ENCODE measurements at regions of chr17 and their contacts with region 1.

Region 1: GRCh38 chr17:45277216-45277849 is 15.4 kb upstream of the SPATA32 start:
- DNase-seq: peak; percentile 97
- H3K4me3 ChIP-seq: peak overlapping the region in 2 of 4 donors; percentile 5 to 9
- H3K27ac ChIP-seq: peak overlapping the region; percentile 68 to 99 (median 82)
- H3K4me1 ChIP-seq: peaks cover 34 to 74% (median 66%) of the 10 kb centered on the region in 4 donors
- H3K27me3 ChIP-seq: no peaks in the 10 kb centered on the region
- CTCF ChIP-seq: peak; percentile 70 to 94 (median 79)
- EP300 ChIP-seq: no peak
- POLR2A ChIP-seq: no peak

Region 2: GRCh38 chr17:45311760-45312476 is 34.6 kb after region 1 on chr17:
- intact Hi-C with region 1: loop called (anchors 5 kb)
- DNase-seq: no peak
- H3K4me3 ChIP-seq: peak overlapping the region; percentile 25 to 41 (median 26)
- H3K27ac ChIP-seq: peak overlapping the region; percentile 92 to 99 (median 94)
- H3K4me1 ChIP-seq: peaks cover 72 to 96% (median 91%) of the 10 kb centered on the region in 4 donors
- H3K27me3 ChIP-seq: no peaks in the 10 kb centered on the region
- CTCF ChIP-seq: no peak
- EP300 ChIP-seq: no peak
- POLR2A ChIP-seq: no peak

Region 3: DNA sequence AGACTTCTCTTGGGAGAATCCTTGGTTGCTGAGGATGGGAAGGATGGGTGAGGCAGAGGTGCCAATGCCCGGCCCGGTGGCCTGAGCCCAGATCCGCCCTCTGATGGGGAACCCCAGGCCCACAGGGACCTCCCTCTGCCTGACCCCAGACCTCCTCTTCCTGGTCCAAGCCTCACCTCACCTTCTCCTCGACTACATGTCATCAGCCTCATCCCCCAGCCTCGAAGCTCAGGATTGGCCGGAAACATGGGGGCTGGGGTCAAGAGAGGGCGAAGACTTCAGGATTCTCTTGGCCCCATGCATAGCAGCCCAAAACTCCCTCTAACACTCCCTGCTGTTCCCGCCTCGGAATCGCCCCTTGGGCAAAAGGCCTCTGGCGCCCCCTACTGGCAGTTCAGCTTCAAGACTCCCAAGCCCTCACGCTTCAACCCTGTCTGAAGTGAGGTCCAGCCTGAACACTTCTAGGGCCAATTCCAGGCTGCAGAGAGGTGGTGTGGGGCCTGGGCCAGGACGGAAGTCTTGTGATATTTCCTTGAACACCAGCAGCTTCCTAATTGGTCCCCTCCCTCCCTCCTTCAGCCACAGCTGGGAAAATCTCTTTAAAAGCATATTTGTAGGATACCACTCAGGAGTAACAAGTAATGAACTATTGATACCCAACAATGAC is 108.1 kb after region 1 on chr17:
- intact Hi-C with region 1: loop called (anchors 1 kb)
- DNase-seq: peak; percentile 97
- H3K4me3 ChIP-seq: no peak overlapping the region
- H3K27ac ChIP-seq: no peak overlapping the region
- H3K4me1 ChIP-seq: peaks cover 0 to 8% (median 7%) of the 10 kb centered on the region in 4 donors
- H3K27me3 ChIP-seq: peaks cover 0 to 25% (median 0%) of the 10 kb centered on the region in 4 donors
- CTCF ChIP-seq: peak in 2 of 3 experiments; percentile 98 to 99
- EP300 ChIP-seq: no peak
- POLR2A ChIP-seq: no peak

Region 4: DNA sequence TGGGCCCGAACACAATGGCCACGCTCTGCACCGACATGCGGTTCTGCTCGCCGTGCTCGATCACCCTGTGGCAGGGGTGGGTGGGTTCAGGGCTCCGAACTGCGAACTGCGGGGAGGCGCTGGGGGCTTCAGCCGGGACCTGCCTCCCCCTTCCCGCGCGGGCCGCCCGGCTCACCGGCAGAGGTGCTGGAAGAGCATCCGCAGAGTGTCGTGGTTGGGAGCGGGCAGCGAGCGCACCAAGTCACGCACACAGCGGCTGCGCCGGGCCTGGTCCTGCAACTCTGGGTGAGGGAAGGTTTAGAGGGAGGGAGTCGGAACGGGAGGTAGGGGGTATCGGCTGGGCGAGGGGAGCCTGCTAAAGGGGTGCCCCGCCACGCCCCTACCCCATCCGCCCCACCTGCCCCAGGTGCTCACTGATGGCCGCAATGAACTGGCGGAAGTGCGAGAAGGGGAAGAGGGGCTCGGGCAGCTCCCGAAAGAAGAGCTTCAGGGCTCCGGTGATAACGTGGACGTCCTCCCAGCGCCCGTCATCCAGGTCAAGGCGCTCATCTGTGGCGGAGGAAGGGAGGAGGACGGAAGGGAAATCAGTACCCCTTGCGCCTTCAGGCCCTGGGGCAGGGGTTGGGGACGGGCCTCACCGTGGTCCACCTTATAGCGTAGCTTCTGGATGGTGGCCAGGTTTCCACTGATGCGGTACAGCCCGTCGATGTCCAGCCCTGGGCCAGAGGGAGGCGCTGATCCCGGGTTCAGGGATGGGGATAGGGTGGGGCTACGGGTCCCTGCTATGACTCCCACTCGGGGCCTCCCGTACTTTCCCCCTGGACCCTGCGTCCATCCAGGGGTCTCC is 118.5 kb after region 1 on chr17:
- intact Hi-C with region 1: no loop called
- DNase-seq: no peak
- H3K4me3 ChIP-seq: peak overlapping the region; percentile 44 to 53 (median 46)
- H3K27ac ChIP-seq: no peak overlapping the region
- H3K4me1 ChIP-seq: peaks cover 6 to 17% (median 14%) of the 10 kb centered on the region in 4 donors
- H3K27me3 ChIP-seq: peaks cover 0 to 5% (median 0%) of the 10 kb centered on the region in 4 donors
- CTCF ChIP-seq: no peak
- EP300 ChIP-seq: no peak
- POLR2A ChIP-seq: no peak